Common myeloid progenitor, CD34-positive (primary cell): ENCODE measurements at regions of chr13 and their contacts with region 1.

Region 1: GRCh38 chr13:46831588-46832194 is 34.7 kb upstream of the ESD start:
- DNase-seq: peak; percentile 61 to 77 (median 64)
- H3K4me3 ChIP-seq: no peak overlapping the region
- H3K27ac ChIP-seq: no peak overlapping the region
- H3K4me1 ChIP-seq: no peaks in the 10 kb centered on the region
- H3K27me3 ChIP-seq: no peaks in the 10 kb centered on the region

Region 2: DNA sequence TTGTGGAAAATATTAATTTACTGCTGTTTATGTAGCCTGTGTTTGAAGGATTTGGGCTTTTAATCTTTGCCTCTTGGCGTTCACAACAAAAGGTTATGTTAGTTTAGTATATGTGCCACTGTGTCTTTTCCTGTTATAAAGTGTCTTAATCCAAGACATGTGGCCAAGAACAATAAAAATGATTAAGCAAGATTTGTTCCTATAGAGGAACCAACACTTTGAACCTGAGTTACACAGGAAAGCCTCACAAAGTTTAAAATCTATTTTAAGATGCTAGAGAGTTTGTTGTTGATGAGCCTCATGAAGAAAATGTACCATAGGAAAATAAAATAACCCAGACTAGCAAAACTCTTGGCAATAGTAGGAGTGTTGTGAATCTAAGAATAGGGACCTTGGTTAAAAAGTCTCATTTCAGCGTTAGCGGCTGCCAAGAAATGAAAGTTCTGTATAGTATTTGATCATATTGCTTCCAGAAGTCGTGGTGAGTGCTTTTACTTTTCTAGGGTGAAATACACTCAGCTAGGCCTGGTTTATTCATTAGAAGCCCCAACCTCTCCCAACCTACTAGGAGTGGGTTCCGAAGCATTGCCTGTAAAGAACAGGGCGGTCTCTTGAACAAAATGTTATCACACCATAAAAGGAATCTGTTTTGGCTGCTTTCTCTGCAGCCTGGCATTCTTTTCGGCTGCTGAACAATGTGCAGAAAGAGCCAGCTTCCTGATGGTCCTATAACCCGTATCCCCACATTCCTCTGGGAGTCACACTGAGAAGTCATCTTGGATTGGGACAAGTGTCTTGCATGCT is 176.1 kb before region 1 on chr13:
- CTCF ChIA-PET with region 1: no interaction called
- POLR2A ChIA-PET with region 1: no interaction called
- DNase-seq: peak in 1 of 3 donors; percentile 60
- H3K4me3 ChIP-seq: peak overlapping the region in 4 of 7 experiments; percentile 31 to 63 (median 50)
- H3K27ac ChIP-seq: peak overlapping the region; percentile 48 to 83
- H3K4me1 ChIP-seq: peaks cover 0 to 34% (median 20%) of the 10 kb centered on the region in 4 experiments
- H3K27me3 ChIP-seq: no peaks in the 10 kb centered on the region

Region 3: GRCh38 chr13:47774671-47774994 is 942.9 kb after region 1 on chr13:
- CTCF ChIA-PET with region 1: interaction called, 15 read pairs
- POLR2A ChIA-PET with region 1: no interaction called
- DNase-seq: no peak
- H3K4me3 ChIP-seq: no peak overlapping the region
- H3K27ac ChIP-seq: no peak overlapping the region
- H3K4me1 ChIP-seq: no peaks in the 10 kb centered on the region
- H3K27me3 ChIP-seq: no peaks in the 10 kb centered on the region